HepG2 (cell line): ENCODE measurements at regions of chr20 and their contacts with region 1.

Region 1: DNA sequence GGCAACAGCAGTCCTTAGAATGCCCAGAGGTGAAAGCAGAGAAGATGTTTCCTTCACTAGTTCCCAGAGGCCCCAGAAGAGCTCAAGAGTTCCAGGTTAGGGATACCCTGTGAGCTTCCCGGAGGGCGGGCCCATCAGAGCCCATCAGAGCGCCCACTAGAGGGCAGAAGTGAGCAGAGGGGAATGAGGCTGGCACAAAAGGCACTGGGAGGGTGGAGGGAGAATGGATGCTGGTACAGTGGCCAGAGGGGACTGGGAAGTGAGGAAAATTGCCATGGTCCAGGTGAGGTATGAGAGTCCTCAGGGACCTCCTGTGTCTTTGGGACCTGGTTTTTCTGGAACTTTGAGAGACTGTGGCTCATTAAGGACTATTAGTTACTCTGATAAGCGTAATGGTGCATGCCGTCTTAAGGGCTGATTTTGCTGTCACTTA is 57.3 kb downstream of the LINC00237 start:
- DNase-seq: peak; percentile 55
- ATAC-seq: peak; percentile 77
- H3K4me3 ChIP-seq: no peak overlapping the region
- H3K27ac ChIP-seq: no peak overlapping the region
- H3K4me1 ChIP-seq: peaks cover 58% of the 10 kb centered on the region
- H3K27me3 ChIP-seq: no peaks in the 10 kb centered on the region
- CTCF ChIP-seq: peak; percentile 79
- EP300 ChIP-seq: no peak
- POLR2A ChIP-seq: no peak
- RAD21 ChIP-seq: peak; percentile 75

Region 2: DNA sequence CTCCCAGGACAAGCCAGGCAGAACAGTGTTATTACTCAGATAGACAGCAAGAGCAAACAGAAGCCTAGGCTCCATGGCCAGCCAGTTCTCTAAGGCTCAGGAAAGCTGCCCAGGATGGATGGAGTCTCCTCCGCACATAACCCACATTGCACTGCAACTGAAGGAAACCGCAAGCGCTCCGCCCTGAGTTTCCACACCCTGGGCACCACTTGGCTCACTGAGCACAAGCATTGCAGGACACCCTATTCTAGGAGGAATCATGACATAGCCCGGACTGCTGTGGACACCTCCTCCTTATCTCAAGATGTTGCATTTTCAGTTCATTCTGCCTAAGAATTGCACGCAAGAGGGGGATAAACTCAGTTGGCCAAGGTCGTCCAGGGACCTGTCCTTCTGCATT is 14.4 kb after region 1 on chr20:
- CTCF ChIA-PET with region 1: no interaction called
- POLR2A ChIA-PET with region 1: no interaction called
- in situ Hi-C with region 1: no loop called
- intact Hi-C with region 1: no loop called
- DNase-seq: no peak
- ATAC-seq: no peak
- H3K4me3 ChIP-seq: no peak overlapping the region
- H3K27ac ChIP-seq: no peak overlapping the region
- H3K4me1 ChIP-seq: peaks cover 7% of the 10 kb centered on the region
- H3K27me3 ChIP-seq: no peaks in the 10 kb centered on the region
- CTCF ChIP-seq: no peak
- EP300 ChIP-seq: no peak
- POLR2A ChIP-seq: no peak
- RAD21 ChIP-seq: no peak

Region 3: DNA sequence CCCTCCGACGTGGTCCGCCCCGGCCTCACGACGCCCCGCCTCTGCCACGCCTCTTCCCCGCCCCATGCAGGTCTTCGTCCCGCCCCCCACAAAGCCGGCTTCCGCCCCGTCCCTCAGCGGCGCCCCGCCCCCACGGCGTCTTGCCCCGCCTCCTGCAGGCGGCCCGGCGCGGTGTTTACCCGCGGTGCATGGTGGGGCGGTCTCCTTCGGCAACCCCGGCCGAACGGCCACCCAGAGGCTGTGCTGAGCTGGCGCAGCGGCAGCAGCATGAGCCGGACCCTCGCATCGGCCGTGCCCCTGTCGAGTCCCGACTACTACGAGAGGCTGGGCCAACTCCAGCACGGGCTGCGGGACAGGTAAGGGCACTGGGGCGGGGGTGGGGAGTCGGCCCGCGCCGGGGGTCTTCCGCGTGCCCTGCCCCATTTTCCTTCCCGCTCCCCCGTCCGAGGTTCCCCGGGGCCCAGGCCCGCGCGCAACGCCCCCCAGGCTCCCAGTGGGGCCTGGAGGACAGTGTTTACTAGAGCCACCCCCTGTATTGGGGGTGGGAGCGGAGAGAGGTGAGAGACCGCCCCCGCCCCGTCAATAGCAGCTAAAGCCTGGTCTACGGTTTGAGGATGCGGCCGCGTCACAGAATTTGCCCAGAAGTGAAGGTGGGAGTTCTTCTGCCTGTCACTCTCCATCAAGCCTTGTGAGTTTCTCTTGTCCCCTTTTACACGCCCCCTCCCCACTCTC is 77.2 kb after region 1 on chr20 and contains the start of gene KIZ:
- CTCF ChIA-PET with region 1: no interaction called
- POLR2A ChIA-PET with region 1: interaction called, 4 read pairs
- in situ Hi-C with region 1: loop called (anchors 5 kb)
- intact Hi-C with region 1: loop called (anchors 1 kb)
- DNase-seq: peak; percentile 93
- ATAC-seq: peak; percentile 97
- H3K4me3 ChIP-seq: peak within 1 kb of the TSS; percentile 86 to 94 (median 93)
- H3K27ac ChIP-seq: peak within 1 kb of the TSS; percentile 80
- H3K4me1 ChIP-seq: peaks cover 48% of the 10 kb centered on the region
- H3K27me3 ChIP-seq: no peaks in the 10 kb centered on the region; a peak in 1 of 5 replicates
- CTCF ChIP-seq: peak; percentile 70
- EP300 ChIP-seq: peak in 1 of 2 experiments; percentile 35; a peak in 1 of 4 replicates
- POLR2A ChIP-seq: peak; percentile 98
- RAD21 ChIP-seq: peak; percentile 90
- total RNA-seq, gene KIZ: 46.3 and 55.6 TPM in 2 replicates

Region 4: GRCh38 chr20:21499641-21500040 is 450.8 kb after region 1 on chr20:
- CTCF ChIA-PET with region 1: interaction called, 14 read pairs
- POLR2A ChIA-PET with region 1: no interaction called
- in situ Hi-C with region 1: loop called (anchors 10 kb)
- intact Hi-C with region 1: loop called (anchors 2 kb)
- DNase-seq: no peak
- ATAC-seq: no peak
- H3K4me3 ChIP-seq: no peak overlapping the region
- H3K27ac ChIP-seq: no peak overlapping the region
- H3K4me1 ChIP-seq: no peaks in the 10 kb centered on the region
- H3K27me3 ChIP-seq: peaks cover 0 to 38% of the 10 kb centered on the region in 2 experiments; a peak in 2 of 5 replicates
- CTCF ChIP-seq: no peak
- EP300 ChIP-seq: no peak
- POLR2A ChIP-seq: no peak
- RAD21 ChIP-seq: no peak

Region 5: GRCh38 chr20:21505161-21505809 is 456.4 kb after region 1 on chr20:
- CTCF ChIA-PET with region 1: interaction called, 14 read pairs
- POLR2A ChIA-PET with region 1: no interaction called
- in situ Hi-C with region 1: loop called (anchors 10 kb)
- intact Hi-C with region 1: loop called (anchors 2 kb)
- DNase-seq: peak; percentile 55
- ATAC-seq: peak; percentile 75
- H3K4me3 ChIP-seq: peak overlapping the region in 2 of 3 experiments; percentile 19 to 63; a peak in 3 of 6 replicates
- H3K27ac ChIP-seq: no peak overlapping the region
- H3K4me1 ChIP-seq: peaks cover 12% of the 10 kb centered on the region
- H3K27me3 ChIP-seq: peaks cover 10 to 65% of the 10 kb centered on the region in 2 experiments
- CTCF ChIP-seq: peak; percentile 99
- EP300 ChIP-seq: no peak
- POLR2A ChIP-seq: no peak
- RAD21 ChIP-seq: peak; percentile 100